Panc1 (cell line): ENCODE measurements at regions of chr6 and their contacts with region 1.

Region 1: GRCh38 chr6:134464690-134465411 is 146.9 kb upstream of the SGK1 start:
- DNase-seq: no peak
- ATAC-seq: no peak
- H3K4me3 ChIP-seq: no peak overlapping the region
- H3K27ac ChIP-seq: no peak overlapping the region
- H3K4me1 ChIP-seq: no peaks in the 10 kb centered on the region
- H3K27me3 ChIP-seq: no peaks in the 10 kb centered on the region
- CTCF ChIP-seq: no peak

Region 2: DNA sequence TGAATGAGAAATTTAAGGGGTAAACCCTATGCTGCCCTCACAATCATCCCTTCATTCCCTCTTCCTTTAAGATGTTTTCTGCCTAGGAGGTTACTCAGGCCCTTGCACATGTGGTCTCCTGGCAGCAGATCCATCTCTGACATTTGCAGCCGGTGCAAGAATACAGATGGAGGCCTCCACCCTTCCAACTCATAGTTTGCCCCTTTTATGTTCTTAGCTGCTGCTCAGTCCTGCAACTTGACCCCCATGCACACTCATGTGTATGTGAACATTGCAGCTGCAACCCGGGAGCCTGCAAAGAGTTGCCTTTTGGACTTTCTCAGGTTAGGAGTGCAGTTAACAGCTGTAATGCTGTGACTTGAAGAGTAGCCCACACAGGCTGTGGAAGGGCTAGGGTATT is 15.1 kb before region 1 on chr6:
- CTCF ChIA-PET with region 1: interaction called, 10 read pairs
- POLR2A ChIA-PET with region 1: no interaction called
- in situ Hi-C with region 1: no loop called
- intact Hi-C with region 1: no loop called
- DNase-seq: no peak
- ATAC-seq: no peak
- H3K4me3 ChIP-seq: no peak overlapping the region
- H3K27ac ChIP-seq: no peak overlapping the region
- H3K4me1 ChIP-seq: no peaks in the 10 kb centered on the region
- H3K27me3 ChIP-seq: no peaks in the 10 kb centered on the region
- CTCF ChIP-seq: no peak

Region 3: GRCh38 chr6:134529921-134530320 is 65.1 kb after region 1 on chr6:
- CTCF ChIA-PET with region 1: no interaction called
- POLR2A ChIA-PET with region 1: no interaction called
- in situ Hi-C with region 1: no loop called
- intact Hi-C with region 1: no loop called
- DNase-seq: no peak
- ATAC-seq: no peak
- H3K4me3 ChIP-seq: no peak overlapping the region
- H3K27ac ChIP-seq: no peak overlapping the region
- H3K4me1 ChIP-seq: no peaks in the 10 kb centered on the region
- H3K27me3 ChIP-seq: no peaks in the 10 kb centered on the region
- CTCF ChIP-seq: no peak

Region 4: GRCh38 chr6:134551245-134551960 is 86.6 kb after region 1 on chr6:
- CTCF ChIA-PET with region 1: no interaction called
- POLR2A ChIA-PET with region 1: interaction called, 16 read pairs
- in situ Hi-C with region 1: no loop called
- intact Hi-C with region 1: no loop called
- DNase-seq: peak; percentile 51
- ATAC-seq: peak; percentile 68
- H3K4me3 ChIP-seq: no peak overlapping the region
- H3K27ac ChIP-seq: no peak overlapping the region
- H3K4me1 ChIP-seq: no peaks in the 10 kb centered on the region
- H3K27me3 ChIP-seq: no peaks in the 10 kb centered on the region
- CTCF ChIP-seq: no peak

Region 5: DNA sequence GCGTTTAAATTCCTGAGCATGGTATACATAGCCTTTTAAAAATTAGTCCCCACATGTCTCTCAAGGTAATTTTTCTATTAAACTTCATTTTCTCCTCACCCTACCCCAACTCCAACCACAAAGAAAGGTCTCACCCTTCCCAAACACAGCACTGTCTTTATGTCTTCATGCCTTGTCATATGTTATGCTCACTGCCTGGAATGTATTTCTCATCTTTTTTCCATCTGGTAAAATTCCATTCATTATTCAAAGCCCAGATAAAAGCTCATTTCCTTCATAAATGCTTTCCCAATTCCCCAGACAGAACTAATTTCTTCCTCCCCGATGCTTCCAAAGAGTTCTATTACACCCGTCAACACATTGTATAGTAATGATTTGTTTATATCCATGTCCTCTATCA is 183.0 kb after region 1 on chr6:
- CTCF ChIA-PET with region 1: no interaction called
- POLR2A ChIA-PET with region 1: no interaction called
- in situ Hi-C with region 1: no loop called
- intact Hi-C with region 1: no loop called
- DNase-seq: no peak
- ATAC-seq: no peak
- H3K4me3 ChIP-seq: no peak overlapping the region
- H3K27ac ChIP-seq: no peak overlapping the region
- H3K4me1 ChIP-seq: no peaks in the 10 kb centered on the region
- H3K27me3 ChIP-seq: no peaks in the 10 kb centered on the region
- CTCF ChIP-seq: no peak